Mammary epithelial cell (primary cell): ENCODE measurements at regions of chr15 and their contacts with region 1.

Region 1: DNA sequence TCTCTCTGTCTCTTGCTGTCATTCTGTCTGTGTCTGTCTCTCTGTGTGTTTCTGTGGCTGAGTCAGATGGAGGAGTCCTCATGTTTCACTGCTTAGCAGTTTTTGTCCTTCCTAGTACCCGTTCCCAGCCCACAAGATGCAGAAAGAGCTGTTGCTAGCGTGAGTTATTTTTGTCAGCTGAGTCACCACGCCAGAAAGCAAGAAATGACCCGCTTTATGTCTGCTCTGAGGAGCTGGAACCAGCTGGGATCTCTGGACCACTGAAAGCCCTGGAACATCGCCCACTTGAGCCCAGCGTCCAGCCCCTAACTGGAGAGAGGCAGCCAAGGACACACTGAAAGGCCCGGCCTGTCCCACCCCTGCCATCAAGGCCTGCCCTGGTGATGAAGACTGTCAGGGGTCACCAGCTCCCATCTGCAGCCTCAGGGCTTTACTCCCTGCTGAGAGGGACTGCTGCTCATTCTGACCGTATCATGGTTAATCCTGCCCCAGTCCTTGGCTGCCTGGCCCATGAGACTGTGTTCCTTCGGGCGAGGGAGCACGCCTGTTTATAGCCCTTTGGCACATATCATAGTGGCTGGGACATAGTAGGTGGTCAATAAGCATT is 101.7 kb upstream of the TPM1 start:
- DNase-seq: peak; percentile 95
- H3K4me3 ChIP-seq: no peak overlapping the region
- H3K27ac ChIP-seq: peak overlapping the region; percentile 48
- H3K4me1 ChIP-seq: peaks cover 21% of the 10 kb centered on the region
- H3K27me3 ChIP-seq: no peaks in the 10 kb centered on the region
- CTCF ChIP-seq: no peak

Region 2: GRCh38 chr15:62909257-62909656 is 31.6 kb before region 1 on chr15:
- CTCF ChIA-PET with region 1: no interaction called
- dilution Hi-C with region 1: loop called (anchors 5 kb)
- in situ Hi-C with region 1: no loop called
- intact Hi-C with region 1: no loop called
- DNase-seq: no peak
- H3K4me3 ChIP-seq: no peak overlapping the region
- H3K27ac ChIP-seq: no peak overlapping the region
- H3K4me1 ChIP-seq: no peaks in the 10 kb centered on the region
- H3K27me3 ChIP-seq: no peaks in the 10 kb centered on the region
- CTCF ChIP-seq: peak in 1 of 2 donors; percentile 9

Region 3: GRCh38 chr15:62928242-62928995 is 12.4 kb before region 1 on chr15:
- CTCF ChIA-PET with region 1: interaction called, 6 read pairs
- dilution Hi-C with region 1: no loop called
- in situ Hi-C with region 1: no loop called
- intact Hi-C with region 1: loop called (anchors 1 kb)
- DNase-seq: peak; percentile 88
- H3K4me3 ChIP-seq: no peak overlapping the region
- H3K27ac ChIP-seq: peak overlapping the region; percentile 87
- H3K4me1 ChIP-seq: peaks cover 32% of the 10 kb centered on the region
- H3K27me3 ChIP-seq: no peaks in the 10 kb centered on the region
- CTCF ChIP-seq: peak; percentile 39 to 46

Region 4: DNA sequence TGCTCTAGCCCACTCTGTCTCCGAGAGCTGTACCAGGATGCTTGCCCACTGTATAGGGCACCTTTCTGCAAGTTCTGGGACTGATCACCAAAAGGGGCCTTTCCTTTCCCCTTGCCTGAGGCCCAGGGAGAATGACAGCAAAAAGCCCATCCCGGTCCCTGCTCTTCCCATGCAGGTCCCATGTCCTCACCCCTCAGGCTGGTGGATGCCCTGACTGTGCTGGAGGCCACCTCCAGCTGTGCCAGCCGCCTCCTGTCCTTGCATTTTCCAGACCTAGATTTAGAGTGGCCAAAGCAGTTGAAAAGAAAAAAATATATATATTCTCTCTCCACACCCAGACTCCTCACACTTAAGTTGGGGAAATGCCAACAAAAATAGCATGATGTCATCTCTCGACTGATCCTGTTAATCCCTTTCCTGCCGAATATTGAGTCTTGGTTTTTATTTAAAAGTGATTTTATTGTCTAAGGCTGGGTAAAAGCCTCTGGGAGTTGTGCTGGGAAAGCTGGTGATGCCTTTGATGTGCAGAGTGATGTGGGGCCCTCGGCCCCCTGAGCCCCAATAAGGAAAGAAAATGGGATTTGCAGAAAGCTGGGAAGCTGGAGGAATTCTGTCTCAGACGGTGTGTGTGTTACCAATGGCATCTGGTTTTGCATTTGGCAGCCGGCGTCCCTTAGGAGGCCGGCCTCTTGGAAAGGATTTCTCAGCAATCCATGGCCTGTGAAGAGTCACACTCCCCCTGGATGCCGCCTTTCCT is 72.4 kb after region 1 on chr15:
- CTCF ChIA-PET with region 1: no interaction called
- dilution Hi-C with region 1: loop called (anchors 5 kb)
- in situ Hi-C with region 1: no loop called
- intact Hi-C with region 1: loop called (anchors 5 kb)
- DNase-seq: peak; percentile 73
- H3K4me3 ChIP-seq: no peak overlapping the region
- H3K27ac ChIP-seq: peak overlapping the region; percentile 37
- H3K4me1 ChIP-seq: peaks cover 30% of the 10 kb centered on the region
- H3K27me3 ChIP-seq: no peaks in the 10 kb centered on the region
- CTCF ChIP-seq: no peak

Region 5: DNA sequence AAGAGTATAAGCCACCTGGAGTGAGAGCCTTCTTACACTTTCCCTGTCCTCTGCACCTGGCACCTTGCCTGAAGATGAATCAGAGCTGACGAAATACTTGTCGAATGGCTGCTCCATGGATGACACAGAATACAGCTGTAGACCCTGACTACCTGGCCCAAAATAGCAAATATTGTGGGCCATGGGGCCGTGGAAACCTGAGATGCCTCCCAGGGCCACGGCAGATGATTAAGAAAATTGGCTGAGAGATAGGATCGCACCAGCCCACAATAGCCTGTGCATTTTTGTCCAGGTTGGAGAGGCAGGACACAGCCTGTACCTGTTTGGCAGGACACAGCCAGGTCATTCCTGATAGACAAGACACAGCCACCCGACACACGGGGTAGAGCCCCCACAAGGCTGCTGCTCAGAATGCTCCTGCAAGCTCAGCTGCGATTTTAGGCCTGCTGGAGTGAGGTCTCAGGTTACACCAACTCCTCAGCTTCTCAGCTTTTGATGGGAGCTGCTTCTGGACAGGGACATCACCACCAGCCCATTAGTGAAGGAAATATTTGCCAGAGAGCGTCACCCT is 78.8 kb after region 1 on chr15:
- CTCF ChIA-PET with region 1: no interaction called
- dilution Hi-C with region 1: loop called (anchors 5 kb)
- in situ Hi-C with region 1: no loop called
- intact Hi-C with region 1: loop called (anchors 5 kb)
- DNase-seq: peak; percentile 99
- H3K4me3 ChIP-seq: no peak overlapping the region
- H3K27ac ChIP-seq: peak overlapping the region; percentile 59
- H3K4me1 ChIP-seq: peaks cover 61% of the 10 kb centered on the region
- H3K27me3 ChIP-seq: no peaks in the 10 kb centered on the region
- CTCF ChIP-seq: no peak